Activated CD4-positive, alpha-beta T cell treated with anti-CD3 and anti-CD28 coated beads, Interleukin-2, amount 10 ng/mL, durations not matched to agents 24 days and 14 days (primary cell): ENCODE measurements at regions of chr2 and their contacts with region 1.

Region 1: DNA sequence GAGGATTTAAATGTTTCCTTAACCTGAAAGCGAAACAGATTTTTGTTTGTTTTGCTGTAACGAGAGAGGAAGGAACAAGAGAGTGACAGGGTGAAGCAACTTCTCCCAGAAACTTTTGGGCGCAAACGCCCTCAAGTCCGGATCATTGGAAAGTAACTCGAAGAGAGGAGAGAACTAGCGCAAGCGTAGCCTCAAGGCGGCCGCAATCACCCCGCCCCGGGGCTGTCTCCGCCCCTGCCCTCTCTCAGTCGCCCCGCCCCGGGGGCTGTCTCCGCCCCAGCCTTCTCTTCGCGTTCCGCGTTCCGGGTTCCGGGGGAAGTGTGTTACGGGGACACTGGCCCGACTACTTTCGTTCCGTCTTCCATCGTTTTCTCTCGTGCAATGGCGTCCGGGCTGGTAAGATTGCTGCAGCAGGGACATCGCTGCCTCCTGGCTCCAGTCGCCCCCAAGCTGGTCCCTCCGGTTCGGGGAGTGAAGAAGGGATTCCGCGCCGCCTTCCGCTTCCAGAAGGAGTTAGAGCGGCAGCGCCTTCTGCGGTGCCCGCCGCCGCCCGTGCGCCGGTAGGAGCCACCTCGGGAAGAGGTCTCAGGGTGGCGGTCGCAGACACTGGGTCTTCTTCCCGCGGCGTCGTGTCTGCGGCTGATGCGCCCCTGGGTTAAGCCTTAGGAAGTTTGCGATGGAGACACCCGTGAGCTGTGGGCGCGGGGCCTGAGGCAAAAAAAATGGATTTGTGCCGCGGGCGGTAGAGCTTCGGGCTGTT is at the start of gene MRPL44:
- DNase-seq: peak; percentile 100
- H3K4me3 Mint-ChIP-seq: peak within 1 kb of the TSS; percentile 95
- H3K27ac Mint-ChIP-seq: peak within 1 kb of the TSS; percentile 95
- H3K4me1 Mint-ChIP-seq: peaks cover 62% of the 10 kb centered on the region
- H3K27me3 Mint-ChIP-seq: no peaks in the 10 kb centered on the region
- total RNA-seq, gene MRPL44: 37.3 and 37.4 TPM in 2 replicates

Region 2: DNA sequence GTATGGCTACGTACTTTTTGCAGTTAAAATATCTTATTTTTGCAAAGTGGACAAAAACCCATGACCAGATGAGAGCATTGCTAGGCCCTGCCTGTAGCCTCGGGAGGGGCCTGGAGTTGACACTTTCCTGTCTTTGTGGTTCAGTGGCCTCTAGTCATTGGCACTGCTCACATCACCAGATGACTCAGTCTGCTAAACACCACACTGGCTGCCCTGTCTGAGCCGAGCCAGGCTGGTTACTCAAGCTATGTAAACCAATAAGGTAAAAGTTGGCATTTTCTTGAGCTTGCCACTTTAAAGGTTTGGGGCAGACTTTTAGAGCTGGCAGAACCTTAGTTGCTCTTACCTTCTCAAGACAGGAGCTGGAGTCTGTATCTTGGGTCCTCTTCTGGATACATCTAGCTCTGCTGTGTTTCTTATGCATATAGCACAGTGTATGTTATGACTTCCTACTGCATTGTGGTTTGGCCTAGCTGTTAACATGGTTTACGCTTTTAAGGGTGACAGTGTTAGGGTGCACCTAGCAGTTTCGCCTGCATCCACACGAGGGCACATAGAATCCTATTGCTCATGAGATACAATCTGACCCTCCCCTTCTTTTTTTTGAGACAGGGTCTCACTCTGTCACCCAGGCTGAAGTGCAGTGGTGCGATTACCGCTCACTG is 196.3 kb before region 1 on chr2:
- intact Hi-C with region 1: loop called (anchors 5 kb)
- DNase-seq: peak; percentile 86
- H3K4me3 Mint-ChIP-seq: peak overlapping the region; percentile 48
- H3K27ac Mint-ChIP-seq: peak overlapping the region; percentile 78
- H3K4me1 Mint-ChIP-seq: peaks cover 25% of the 10 kb centered on the region
- H3K27me3 Mint-ChIP-seq: no peaks in the 10 kb centered on the region

Region 3: DNA sequence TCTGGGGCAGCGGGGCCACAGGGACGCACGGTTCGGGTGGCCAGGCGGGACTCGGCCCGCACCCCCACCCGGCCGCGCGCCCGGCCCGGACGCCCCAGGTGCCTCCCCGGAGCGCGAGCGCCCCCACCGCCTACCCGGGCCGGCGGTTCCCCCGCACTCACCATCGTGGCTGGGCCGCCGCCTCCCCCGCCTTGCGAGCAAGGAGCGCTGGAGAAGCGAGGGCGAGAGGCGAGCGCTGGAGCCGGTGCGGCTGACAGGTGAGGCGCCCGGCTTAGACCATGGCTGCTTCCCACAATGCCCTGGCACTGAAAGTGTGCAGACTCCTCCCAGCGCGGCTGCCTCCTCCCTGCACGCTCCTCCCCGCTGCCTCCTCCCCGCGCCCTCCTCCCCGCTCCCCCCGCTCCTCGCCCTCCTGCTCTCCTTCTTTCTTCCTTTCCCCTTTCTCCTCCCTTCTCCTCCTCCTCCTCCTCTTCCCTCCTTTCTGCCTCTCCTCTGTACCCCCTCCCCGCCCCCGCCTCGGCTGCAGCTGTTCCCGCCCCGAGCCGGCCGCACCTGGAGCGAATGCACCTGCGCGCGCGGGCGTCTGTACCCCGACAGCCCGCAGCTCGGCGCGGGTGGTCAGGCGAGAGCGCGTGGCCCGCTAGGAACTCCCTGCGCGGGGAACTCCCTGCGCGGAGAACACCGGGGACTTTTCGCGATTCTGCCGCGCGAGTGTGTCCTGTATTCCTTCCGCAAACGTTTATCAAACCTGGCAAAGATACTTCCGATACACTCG is 119.8 kb before region 1 on chr2 and contains the start of gene AP1S3:
- intact Hi-C with region 1: loop called (anchors 1 kb)
- DNase-seq: peak; percentile 91
- H3K4me3 Mint-ChIP-seq: peak within 1 kb of the TSS; percentile 90
- H3K27ac Mint-ChIP-seq: peak within 1 kb of the TSS; percentile 83
- H3K4me1 Mint-ChIP-seq: peaks cover 13% of the 10 kb centered on the region
- H3K27me3 Mint-ChIP-seq: no peaks in the 10 kb centered on the region
- total RNA-seq, gene AP1S3: 14.1 and 17.4 TPM in 2 replicates

Region 4: DNA sequence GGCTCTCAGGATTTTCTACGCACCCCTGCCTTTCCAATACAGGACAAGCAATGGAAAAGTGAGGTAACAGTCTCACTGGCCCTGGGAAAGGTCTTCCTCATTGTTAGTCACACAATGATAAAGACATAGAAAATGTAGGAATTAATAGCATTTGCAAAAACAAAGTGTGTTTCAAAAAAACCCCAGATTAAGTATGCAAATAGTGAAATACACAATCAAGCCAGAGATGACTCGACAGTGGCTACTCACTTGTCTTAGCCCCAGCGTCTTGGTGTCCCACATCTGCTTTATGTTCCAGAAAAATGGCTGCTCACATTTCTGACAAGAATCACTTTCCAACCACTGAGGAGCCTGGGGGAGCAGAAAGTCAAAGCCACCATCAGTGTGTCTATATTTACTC is 72.9 kb before region 1 on chr2:
- intact Hi-C with region 1: loop called (anchors 5 kb)
- DNase-seq: no peak
- H3K4me3 Mint-ChIP-seq: no peak overlapping the region
- H3K27ac Mint-ChIP-seq: peak overlapping the region; percentile 73
- H3K4me1 Mint-ChIP-seq: peaks cover 12% of the 10 kb centered on the region
- H3K27me3 Mint-ChIP-seq: no peaks in the 10 kb centered on the region

Region 5: GRCh38 chr2:223944703-223945531 is 12.4 kb before region 1 on chr2 and contains the start of gene WDFY1:
- intact Hi-C with region 1: loop called (anchors 1 kb)
- DNase-seq: peak; percentile 94
- H3K4me3 Mint-ChIP-seq: peak within 1 kb of the TSS; percentile 91
- H3K27ac Mint-ChIP-seq: peak within 1 kb of the TSS; percentile 94
- H3K4me1 Mint-ChIP-seq: peaks cover 54% of the 10 kb centered on the region
- H3K27me3 Mint-ChIP-seq: no peaks in the 10 kb centered on the region
- total RNA-seq, gene WDFY1: 25.3 and 27.8 TPM in 2 replicates

Region 6: GRCh38 chr2:224004105-224004695 is 46.9 kb after region 1 on chr2:
- intact Hi-C with region 1: no loop called
- DNase-seq: no peak
- H3K4me3 Mint-ChIP-seq: no peak overlapping the region
- H3K27ac Mint-ChIP-seq: no peak overlapping the region
- H3K4me1 Mint-ChIP-seq: no peaks in the 10 kb centered on the region
- H3K27me3 Mint-ChIP-seq: no peaks in the 10 kb centered on the region

Region 7: DNA sequence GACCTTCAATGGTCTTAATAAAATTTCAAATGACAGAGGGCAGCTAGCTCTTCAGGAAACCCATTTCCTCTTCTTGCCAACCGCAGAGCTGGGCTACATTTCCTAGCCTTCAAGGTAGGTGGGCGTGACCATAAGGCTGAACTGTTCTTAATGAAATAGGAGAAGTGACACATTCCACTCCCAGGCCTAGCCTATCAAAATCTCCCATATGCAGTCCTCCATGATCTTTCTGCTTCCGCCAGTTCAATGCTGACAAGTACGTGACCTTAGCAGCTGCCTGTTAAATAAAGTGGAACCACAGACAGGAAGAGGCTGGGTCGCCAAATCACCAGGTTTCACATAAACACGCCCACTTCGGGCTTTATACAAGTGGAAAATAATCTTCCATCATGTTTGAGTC is 68.6 kb after region 1 on chr2:
- intact Hi-C with region 1: loop called (anchors 1 kb)
- DNase-seq: peak; percentile 90
- H3K4me3 Mint-ChIP-seq: peak overlapping the region; percentile 46
- H3K27ac Mint-ChIP-seq: peak overlapping the region; percentile 95
- H3K4me1 Mint-ChIP-seq: peaks cover 64% of the 10 kb centered on the region
- H3K27me3 Mint-ChIP-seq: no peaks in the 10 kb centered on the region

Region 8: GRCh38 chr2:224309176-224309575 is 351.9 kb after region 1 on chr2:
- intact Hi-C with region 1: no loop called
- DNase-seq: no peak
- H3K4me3 Mint-ChIP-seq: no peak overlapping the region
- H3K27ac Mint-ChIP-seq: no peak overlapping the region
- H3K4me1 Mint-ChIP-seq: peaks cover 6% of the 10 kb centered on the region
- H3K27me3 Mint-ChIP-seq: peaks cover 9% of the 10 kb centered on the region